ENCODE measurements at regions of chr17 and their contacts with region 1.

Region 1: DNA sequence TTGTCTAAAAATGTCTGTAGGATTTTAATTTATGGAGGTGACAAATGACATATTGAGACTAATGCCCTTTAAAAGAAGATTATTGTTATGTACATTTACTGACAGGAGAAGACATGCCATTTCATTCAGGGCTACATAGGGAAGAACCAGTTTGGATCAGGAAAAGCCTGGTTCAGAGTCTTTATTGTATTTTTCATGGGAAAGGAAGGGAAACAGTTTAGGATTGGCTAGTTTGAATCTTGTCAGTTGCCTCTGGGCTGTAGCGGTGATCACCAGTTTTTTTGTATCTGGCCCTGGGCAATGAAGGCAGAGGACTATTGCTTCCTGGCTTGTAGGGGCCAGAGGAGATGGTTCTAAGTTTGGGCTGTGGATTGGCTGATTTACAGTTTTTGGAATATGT is 31.8 kb downstream of the NSRP1 start:
- DNase-seq: no peak
- ATAC-seq: no peak
- H3K4me3 ChIP-seq: no peak overlapping the region
- H3K27ac ChIP-seq: no peak overlapping the region
- H3K4me1 ChIP-seq: peaks cover 5% of the 10 kb centered on the region; the same call in 1 of the 2 replicates
- H3K27me3 ChIP-seq: no peaks in the 10 kb centered on the region
- CTCF ChIP-seq: no peak

Region 2: GRCh38 chr17:29857823-29858222 is 290.6 kb before region 1 on chr17:
- CTCF ChIA-PET with region 1: no interaction called
- POLR2A ChIA-PET with region 1: no interaction called
- in situ Hi-C with region 1: no loop called
- intact Hi-C with region 1: no loop called
- DNase-seq: no peak
- ATAC-seq: no peak
- H3K4me3 ChIP-seq: no peak overlapping the region
- H3K27ac ChIP-seq: no peak overlapping the region
- H3K4me1 ChIP-seq: no peaks in the 10 kb centered on the region
- H3K27me3 ChIP-seq: no peaks in the 10 kb centered on the region
- CTCF ChIP-seq: no peak

Region 3: DNA sequence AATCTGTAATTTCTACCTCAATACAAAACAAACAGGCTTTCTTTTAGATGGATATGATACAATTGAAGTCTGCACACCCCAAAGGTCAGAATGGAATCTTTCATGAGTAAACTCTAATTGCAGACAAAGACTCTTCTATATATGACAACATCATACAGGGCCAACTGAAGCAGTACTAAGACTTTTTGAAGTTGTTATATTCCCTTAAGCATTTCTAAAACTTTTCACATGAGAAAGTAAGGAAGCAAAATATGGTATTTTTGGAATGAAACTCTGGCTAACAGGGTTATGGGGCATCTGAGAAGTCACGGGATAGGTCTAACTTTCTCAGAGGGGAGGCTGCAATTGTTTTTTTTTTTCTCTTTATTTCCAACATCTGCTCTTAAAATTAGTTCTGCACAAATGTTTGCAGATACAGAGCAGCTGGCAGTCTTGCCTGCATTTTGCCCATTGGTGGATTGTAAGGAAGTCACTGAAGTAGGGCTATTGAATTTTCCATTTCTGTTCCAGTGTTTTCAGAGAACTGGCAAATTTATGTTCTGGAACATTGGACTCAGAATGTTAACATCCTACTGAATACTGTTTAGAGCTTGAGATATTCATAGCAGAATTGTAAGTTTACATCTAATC is 277.4 kb before region 1 on chr17:
- CTCF ChIA-PET with region 1: no interaction called
- POLR2A ChIA-PET with region 1: no interaction called
- in situ Hi-C with region 1: no loop called
- intact Hi-C with region 1: no loop called
- DNase-seq: no peak
- ATAC-seq: no peak
- H3K4me3 ChIP-seq: no peak overlapping the region
- H3K27ac ChIP-seq: no peak overlapping the region
- H3K4me1 ChIP-seq: no peaks in the 10 kb centered on the region; the same call in none of the 2 replicates
- H3K27me3 ChIP-seq: no peaks in the 10 kb centered on the region
- CTCF ChIP-seq: no peak

Region 4: GRCh38 chr17:30116661-30117551 is 31.5 kb before region 1 on chr17 and contains the start of gene NSRP1:
- CTCF ChIA-PET with region 1: no interaction called
- POLR2A ChIA-PET with region 1: interaction called, 10 read pairs
- in situ Hi-C with region 1: no loop called
- intact Hi-C with region 1: no loop called
- DNase-seq: peak; percentile 84
- ATAC-seq: peak; percentile 98
- H3K4me3 ChIP-seq: peak within 1 kb of the TSS; percentile 79 to 99
- H3K27ac ChIP-seq: peak within 1 kb of the TSS; percentile 99
- H3K4me1 ChIP-seq: peaks cover 24% of the 10 kb centered on the region
- H3K27me3 ChIP-seq: no peaks in the 10 kb centered on the region
- CTCF ChIP-seq: no peak
- total RNA-seq, gene NSRP1: 30.5 TPM

Region 5: DNA sequence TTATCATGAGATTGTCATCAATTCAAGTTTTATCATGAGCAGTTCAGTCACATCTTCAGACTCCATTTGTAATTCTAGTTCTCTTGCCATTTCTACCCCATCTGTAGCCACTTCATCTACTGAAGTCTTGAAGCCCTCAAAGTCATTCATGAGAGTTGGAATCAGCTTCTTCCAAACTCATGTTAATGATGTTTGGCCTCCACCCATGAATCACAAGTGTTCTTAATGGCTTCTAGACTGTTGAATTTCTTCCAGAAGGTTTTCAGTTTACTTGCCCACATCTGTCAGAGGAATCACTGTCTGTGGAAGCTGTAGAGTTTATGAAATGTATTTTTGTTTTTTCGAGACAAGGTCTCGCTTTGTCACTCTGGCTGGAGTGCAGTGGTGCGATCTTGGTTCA is 15.8 kb before region 1 on chr17:
- CTCF ChIA-PET with region 1: no interaction called
- POLR2A ChIA-PET with region 1: interaction called, 12 read pairs
- in situ Hi-C with region 1: no loop called
- intact Hi-C with region 1: no loop called
- DNase-seq: no peak
- ATAC-seq: no peak
- H3K4me3 ChIP-seq: no peak overlapping the region
- H3K27ac ChIP-seq: no peak overlapping the region
- H3K4me1 ChIP-seq: no peaks in the 10 kb centered on the region
- H3K27me3 ChIP-seq: no peaks in the 10 kb centered on the region
- CTCF ChIP-seq: no peak

Region 6: DNA sequence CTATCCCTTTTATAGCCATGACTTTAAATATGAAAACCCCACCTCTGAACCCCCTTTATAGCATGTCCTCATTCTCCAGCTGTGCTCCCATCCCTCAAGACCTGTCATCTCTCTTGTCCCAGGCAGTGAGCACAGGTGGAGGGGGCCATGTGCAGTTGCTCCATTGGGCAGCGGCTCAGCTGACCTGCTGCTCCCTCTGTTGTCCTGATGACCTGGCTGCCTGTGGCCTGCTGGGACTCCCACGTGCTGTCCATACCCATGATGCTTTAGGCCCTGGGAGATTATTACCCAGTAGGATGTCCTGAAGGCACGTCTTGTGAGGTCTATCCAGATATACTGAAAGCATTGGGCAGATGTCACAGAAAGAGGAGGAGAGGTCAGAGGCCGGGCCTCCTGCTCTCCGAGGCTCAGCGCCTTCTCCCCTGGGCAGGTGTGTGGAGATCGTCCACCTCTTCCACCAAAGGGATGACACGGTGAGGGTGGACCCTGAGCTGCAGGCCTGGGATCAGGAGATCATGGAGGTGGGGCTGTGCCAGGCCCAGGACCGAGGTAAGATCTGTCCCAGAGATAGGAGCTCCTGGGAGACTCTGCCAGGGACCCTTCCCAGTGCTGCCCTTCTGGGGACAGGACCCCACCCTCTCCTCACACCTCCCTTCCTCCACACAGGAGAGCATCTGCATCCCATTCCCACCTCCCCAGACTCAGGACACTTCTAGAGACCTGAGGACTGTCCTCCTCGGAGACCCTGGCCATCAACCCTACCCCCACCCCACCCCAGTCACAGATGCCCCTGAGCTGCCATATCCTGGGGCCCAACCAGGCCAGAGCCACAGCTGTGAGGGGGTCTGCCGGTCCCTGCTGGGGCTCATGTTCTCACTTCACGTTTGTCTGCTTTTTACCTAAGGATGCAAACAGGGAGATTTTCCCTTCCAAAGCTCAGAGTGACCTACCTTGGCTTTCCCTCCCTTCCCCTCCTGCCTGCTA is 386.9 kb after region 1 on chr17:
- CTCF ChIA-PET with region 1: no interaction called
- POLR2A ChIA-PET with region 1: no interaction called
- in situ Hi-C with region 1: no loop called
- intact Hi-C with region 1: no loop called
- DNase-seq: no peak
- ATAC-seq: 0 out of 2 replicates have a peak, but pooled peaks have one; percentile 36
- H3K4me3 ChIP-seq: no peak overlapping the region
- H3K27ac ChIP-seq: no peak overlapping the region
- H3K4me1 ChIP-seq: no peaks in the 10 kb centered on the region
- H3K27me3 ChIP-seq: peaks cover 3% of the 10 kb centered on the region; the same call in 1 of the 2 replicates
- CTCF ChIP-seq: no peak